Natural killer cell (primary cell): ENCODE measurements at regions of chr13 and their contacts with region 1.

Region 1: DNA sequence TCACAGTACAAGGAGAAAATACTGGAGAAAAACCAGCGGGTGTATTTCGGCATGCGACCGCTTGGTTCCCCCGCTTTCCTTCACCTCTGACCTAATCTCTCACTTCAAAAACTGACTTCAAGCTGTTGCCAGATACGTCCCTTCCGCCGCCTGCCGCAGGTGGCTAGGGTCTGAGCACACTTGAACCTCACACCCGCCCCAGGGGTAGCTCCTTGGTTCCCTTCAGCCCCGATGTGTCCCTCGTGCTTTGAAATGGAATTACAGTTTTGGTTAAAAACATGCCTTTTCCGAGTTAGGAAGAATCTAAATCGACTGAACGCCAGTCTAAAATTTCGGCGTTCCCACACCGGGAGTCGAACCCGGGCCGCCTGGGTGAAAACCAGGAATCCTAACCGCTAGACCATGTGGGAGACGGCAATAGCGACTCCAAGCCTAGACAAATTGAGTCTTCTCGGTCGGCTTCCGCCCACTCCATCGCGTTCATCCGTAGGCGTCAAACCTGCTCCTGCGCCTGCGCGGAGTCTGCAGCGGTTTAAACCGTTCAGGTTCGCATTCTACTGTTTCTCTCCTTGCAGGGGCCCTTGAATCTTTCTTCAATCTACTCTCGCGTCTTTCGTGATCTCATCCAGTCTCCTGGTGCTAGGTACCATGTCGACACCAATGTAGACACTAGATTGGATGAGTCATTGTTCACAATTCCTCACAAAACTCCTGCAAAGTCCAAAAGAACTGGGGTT is 71.5 kb downstream of the NUFIP1 start:
- DNase-seq: peak; percentile 98 to 100
- ATAC-seq: peak; percentile 71 to 88 (median 77)
- H3K4me3 ChIP-seq: peak overlapping the region; percentile 72
- H3K4me3 Mint-ChIP-seq: no peak overlapping the region
- H3K27ac ChIP-seq: peak overlapping the region; percentile 84
- H3K27ac Mint-ChIP-seq: no peak overlapping the region
- H3K4me1 ChIP-seq: peaks cover 18% of the 10 kb centered on the region
- H3K4me1 Mint-ChIP-seq: no peaks in the 10 kb centered on the region
- H3K27me3 ChIP-seq: no peaks in the 10 kb centered on the region
- H3K27me3 Mint-ChIP-seq: no peaks in the 10 kb centered on the region
- CTCF ChIP-seq: no peak

Region 2: GRCh38 chr13:44591316-44591715 is 326.4 kb before region 1 on chr13:
- intact Hi-C with region 1: loop called (anchors 5 kb)
- DNase-seq: no peak
- ATAC-seq: no peak
- H3K4me3 ChIP-seq: no peak overlapping the region
- H3K4me3 Mint-ChIP-seq: no peak overlapping the region
- H3K27ac ChIP-seq: no peak overlapping the region
- H3K27ac Mint-ChIP-seq: no peak overlapping the region
- H3K4me1 ChIP-seq: peaks cover 10% of the 10 kb centered on the region
- H3K4me1 Mint-ChIP-seq: peaks cover 16 to 23% of the 10 kb centered on the region in 2 donors
- H3K27me3 ChIP-seq: peaks cover 5% of the 10 kb centered on the region
- H3K27me3 Mint-ChIP-seq: peaks cover 18 to 26% of the 10 kb centered on the region in 2 donors
- CTCF ChIP-seq: no peak

Region 3: DNA sequence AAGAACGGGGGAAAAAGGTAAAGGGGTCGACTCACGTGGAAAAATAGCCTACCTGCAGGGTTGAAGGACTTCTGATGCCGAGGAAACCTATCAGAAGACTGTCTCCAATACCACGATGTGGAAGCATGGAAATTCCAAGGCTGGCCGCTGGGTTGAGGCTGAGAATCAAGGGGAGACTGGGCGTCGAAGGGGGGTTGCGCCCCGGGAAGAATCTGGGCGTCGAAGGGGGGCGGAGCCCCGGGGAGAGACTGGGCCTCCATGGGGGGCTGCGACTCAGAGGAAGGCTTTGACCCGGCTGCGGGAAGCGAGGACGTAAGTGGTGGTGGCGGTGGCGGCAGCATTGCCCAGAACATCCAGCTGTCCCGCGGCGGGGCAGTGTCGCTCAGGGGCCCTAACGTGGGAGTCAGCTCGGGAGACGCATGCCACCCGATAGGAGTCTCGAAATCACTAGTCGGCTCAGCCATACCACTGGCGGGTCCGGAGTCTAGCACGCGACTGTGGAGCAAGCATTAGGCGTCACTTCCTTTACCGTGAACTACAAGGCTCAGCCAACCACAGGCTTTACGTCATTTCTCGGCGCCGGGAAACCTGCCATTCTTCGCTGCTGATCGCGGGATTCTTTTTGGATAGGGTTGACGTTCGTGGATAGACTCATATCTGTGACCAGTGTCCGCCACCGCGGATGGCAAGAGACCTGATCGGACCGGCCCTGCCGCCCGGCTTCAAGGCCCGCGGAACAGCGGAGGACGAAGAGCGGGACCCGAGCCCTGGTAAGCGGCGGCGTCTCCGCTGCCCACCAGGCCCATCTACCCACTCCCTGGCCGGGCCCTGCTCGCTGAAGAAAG is 71.4 kb after region 1 on chr13 and contains the starts of genes GPALPP1 and NUFIP1:
- intact Hi-C with region 1: loop called (anchors 1 kb)
- DNase-seq: peak; percentile 89 to 96
- ATAC-seq: peak; percentile 95 to 97 (median 97)
- H3K4me3 ChIP-seq: peak within 1 kb of the TSS; percentile 86
- H3K4me3 Mint-ChIP-seq: peak within 1 kb of the TSS; percentile 99
- H3K27ac ChIP-seq: peak within 1 kb of the TSS; percentile 76
- H3K27ac Mint-ChIP-seq: peak within 1 kb of the TSS; percentile 96 to 97
- H3K4me1 ChIP-seq: peaks cover 25% of the 10 kb centered on the region
- H3K4me1 Mint-ChIP-seq: peaks cover 51 to 63% of the 10 kb centered on the region in 2 donors
- H3K27me3 ChIP-seq: no peaks in the 10 kb centered on the region
- H3K27me3 Mint-ChIP-seq: no peaks in the 10 kb centered on the region
- CTCF ChIP-seq: no peak
- total RNA-seq, gene GPALPP1: 32.4 to 36.6 (median 36.0) TPM
- total RNA-seq, gene NUFIP1: 4.1 to 6.2 (median 4.4) TPM

Region 4: GRCh38 chr13:45119991-45120864 is 202.5 kb after region 1 on chr13 and contains the start of gene GTF2F2:
- intact Hi-C with region 1: loop called (anchors 5 kb)
- DNase-seq: peak; percentile 86 to 95
- ATAC-seq: peak; percentile 74 to 83 (median 76)
- H3K4me3 ChIP-seq: peak within 1 kb of the TSS; percentile 90
- H3K4me3 Mint-ChIP-seq: no peak within 1 kb of the TSS
- H3K27ac ChIP-seq: peak within 1 kb of the TSS; percentile 92
- H3K27ac Mint-ChIP-seq: no peak within 1 kb of the TSS
- H3K4me1 ChIP-seq: peaks cover 12% of the 10 kb centered on the region
- H3K4me1 Mint-ChIP-seq: peaks cover 8% of the 10 kb centered on the region in 2 donors
- H3K27me3 ChIP-seq: no peaks in the 10 kb centered on the region
- H3K27me3 Mint-ChIP-seq: no peaks in the 10 kb centered on the region
- CTCF ChIP-seq: no peak
- total RNA-seq, gene GTF2F2: 13.6 to 16.4 (median 15.7) TPM

Region 5: DNA sequence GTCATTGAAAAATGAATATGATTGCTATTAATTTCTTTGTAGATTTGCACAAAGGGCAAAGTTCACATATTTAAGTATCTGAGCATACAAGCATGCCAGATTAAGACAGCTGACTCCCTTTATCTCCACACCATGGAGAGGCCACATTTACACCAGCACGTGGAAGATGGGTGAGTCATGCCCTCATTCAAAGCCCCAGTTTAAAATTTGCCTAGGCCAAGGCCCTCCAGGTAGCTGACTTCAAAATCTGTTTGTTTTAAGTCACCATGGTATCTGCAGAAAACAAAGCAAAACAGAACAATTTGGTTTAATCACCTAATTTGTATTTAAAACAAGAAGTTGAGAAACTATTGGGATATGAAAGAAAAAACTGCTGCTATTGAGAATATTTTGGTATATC is 1770.1 kb after region 1 on chr13:
- intact Hi-C with region 1: no loop called
- DNase-seq: peak in 1 of 2 donors; percentile 38
- ATAC-seq: peak in 2 of 3 donors; percentile 43 to 83
- H3K4me3 ChIP-seq: no peak overlapping the region
- H3K4me3 Mint-ChIP-seq: no peak overlapping the region
- H3K27ac ChIP-seq: no peak overlapping the region
- H3K27ac Mint-ChIP-seq: peak overlapping the region; percentile 26 to 51
- H3K4me1 ChIP-seq: peaks cover 3% of the 10 kb centered on the region
- H3K4me1 Mint-ChIP-seq: peaks cover 10 to 20% of the 10 kb centered on the region in 2 donors
- H3K27me3 ChIP-seq: no peaks in the 10 kb centered on the region
- H3K27me3 Mint-ChIP-seq: no peaks in the 10 kb centered on the region
- CTCF ChIP-seq: no peak